ENCODE measurements at regions of chr11 and their contacts with region 1.

Region 1: DNA sequence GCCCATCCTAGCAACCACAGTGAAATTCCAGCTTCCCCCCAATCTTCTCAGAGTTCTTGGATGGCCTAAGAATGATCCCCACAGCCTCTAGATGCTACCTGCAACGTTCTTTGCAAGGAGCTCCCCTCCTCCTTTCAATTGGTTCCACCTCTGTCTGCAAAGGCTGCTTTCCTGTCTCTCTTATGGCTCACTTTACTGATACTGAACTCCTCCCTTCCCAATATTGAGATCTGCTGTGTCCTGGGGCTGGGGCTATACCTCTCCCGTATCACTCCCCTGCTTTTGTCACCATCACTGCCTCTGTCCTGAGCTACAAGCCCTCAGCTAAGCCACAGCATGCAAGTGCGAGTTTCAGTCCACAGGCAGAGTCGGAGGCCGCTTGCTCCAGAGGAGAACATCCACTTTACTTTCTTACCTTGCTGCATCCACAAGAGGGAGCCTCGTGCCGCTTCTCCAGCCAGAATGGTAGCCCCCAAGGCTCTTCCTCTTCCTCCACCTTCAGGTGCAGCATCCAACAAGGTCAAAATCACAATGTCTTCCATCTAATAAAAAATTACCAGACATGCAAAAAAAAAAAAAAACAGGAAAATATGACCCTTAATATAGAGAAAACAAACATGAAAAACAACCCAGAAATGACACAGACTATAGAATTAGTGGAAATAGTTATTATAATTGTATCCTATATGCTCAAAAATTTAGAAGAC is 48.6 kb upstream of the TMEM45B start:
- DNase-seq: peak in 1 of 4 experiments; percentile 51
- ATAC-seq: peak; percentile 93
- H3K4me3 ChIP-seq: no peak overlapping the region
- H3K27ac ChIP-seq: no peak overlapping the region
- H3K4me1 ChIP-seq: no peaks in the 10 kb centered on the region
- H3K27me3 ChIP-seq: no peaks in the 10 kb centered on the region; a peak in 1 of 5 replicates
- CTCF ChIP-seq: peak; percentile 36 to 53 (median 49); a peak in 5 of 6 replicates
- EP300 ChIP-seq: no peak
- POLR2A ChIP-seq: no peak
- RAD21 ChIP-seq: peak in 1 of 2 experiments; percentile 24; a peak in 2 of 4 replicates

Region 2: GRCh38 chr11:129815596-129816461 is 48.8 kb after region 1 on chr11 and contains the start of gene TMEM45B:
- CTCF ChIA-PET with region 1: no interaction called
- POLR2A ChIA-PET with region 1: no interaction called
- in situ Hi-C with region 1: no loop called
- intact Hi-C with region 1: no loop called
- DNase-seq: no peak
- ATAC-seq: no peak
- H3K4me3 ChIP-seq: no peak within 1 kb of the TSS
- H3K27ac ChIP-seq: no peak within 1 kb of the TSS
- H3K4me1 ChIP-seq: peaks cover 0 to 6% of the 10 kb centered on the region in 2 experiments; a peak in 2 of 5 replicates
- H3K27me3 ChIP-seq: peaks cover 6 to 26% of the 10 kb centered on the region in 2 experiments; a peak in 4 of 5 replicates
- CTCF ChIP-seq: no peak
- EP300 ChIP-seq: no peak
- POLR2A ChIP-seq: no peak
- RAD21 ChIP-seq: no peak
- polyA plus RNA-seq, gene TMEM45B: not detected

Region 3: GRCh38 chr11:129861702-129862113 is 94.7 kb after region 1 on chr11:
- CTCF ChIA-PET with region 1: no interaction called
- POLR2A ChIA-PET with region 1: no interaction called
- in situ Hi-C with region 1: no loop called
- intact Hi-C with region 1: loop called (anchors 10 kb)
- DNase-seq: no peak
- ATAC-seq: no peak
- H3K4me3 ChIP-seq: no peak overlapping the region
- H3K27ac ChIP-seq: no peak overlapping the region
- H3K4me1 ChIP-seq: peaks cover 2 to 7% of the 10 kb centered on the region in 2 experiments; a peak in 4 of 5 replicates
- H3K27me3 ChIP-seq: no peaks in the 10 kb centered on the region
- CTCF ChIP-seq: no peak
- EP300 ChIP-seq: no peak
- POLR2A ChIP-seq: no peak
- RAD21 ChIP-seq: no peak

Region 4: DNA sequence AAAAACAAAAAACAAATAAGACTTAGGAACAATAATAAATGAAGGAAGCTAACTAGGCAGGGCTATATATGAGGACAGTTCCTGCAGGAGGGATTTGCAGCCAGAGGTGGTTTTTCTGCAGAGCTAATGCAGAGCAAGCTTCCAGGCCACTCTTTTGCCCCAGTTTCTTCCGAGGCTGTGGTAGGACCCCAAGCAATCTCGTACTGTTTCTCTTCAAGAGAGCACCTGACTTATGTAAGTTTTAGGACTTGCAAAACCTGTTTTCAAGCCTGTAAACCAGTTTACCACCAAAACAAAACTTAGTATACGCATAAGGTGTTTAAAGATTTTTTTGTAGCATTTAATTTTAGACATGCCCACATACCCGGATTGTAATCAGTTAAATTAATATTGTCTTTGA is 294.9 kb after region 1 on chr11:
- CTCF ChIA-PET with region 1: no interaction called
- POLR2A ChIA-PET with region 1: no interaction called
- in situ Hi-C with region 1: no loop called
- intact Hi-C with region 1: no loop called
- DNase-seq: no peak
- ATAC-seq: no peak
- H3K4me3 ChIP-seq: no peak overlapping the region
- H3K27ac ChIP-seq: no peak overlapping the region
- H3K4me1 ChIP-seq: peaks cover 0 to 3% of the 10 kb centered on the region in 2 experiments; a peak in 1 of 5 replicates
- H3K27me3 ChIP-seq: peaks cover 11 to 25% of the 10 kb centered on the region in 2 experiments
- CTCF ChIP-seq: no peak
- EP300 ChIP-seq: no peak
- POLR2A ChIP-seq: no peak
- RAD21 ChIP-seq: no peak

Region 5: DNA sequence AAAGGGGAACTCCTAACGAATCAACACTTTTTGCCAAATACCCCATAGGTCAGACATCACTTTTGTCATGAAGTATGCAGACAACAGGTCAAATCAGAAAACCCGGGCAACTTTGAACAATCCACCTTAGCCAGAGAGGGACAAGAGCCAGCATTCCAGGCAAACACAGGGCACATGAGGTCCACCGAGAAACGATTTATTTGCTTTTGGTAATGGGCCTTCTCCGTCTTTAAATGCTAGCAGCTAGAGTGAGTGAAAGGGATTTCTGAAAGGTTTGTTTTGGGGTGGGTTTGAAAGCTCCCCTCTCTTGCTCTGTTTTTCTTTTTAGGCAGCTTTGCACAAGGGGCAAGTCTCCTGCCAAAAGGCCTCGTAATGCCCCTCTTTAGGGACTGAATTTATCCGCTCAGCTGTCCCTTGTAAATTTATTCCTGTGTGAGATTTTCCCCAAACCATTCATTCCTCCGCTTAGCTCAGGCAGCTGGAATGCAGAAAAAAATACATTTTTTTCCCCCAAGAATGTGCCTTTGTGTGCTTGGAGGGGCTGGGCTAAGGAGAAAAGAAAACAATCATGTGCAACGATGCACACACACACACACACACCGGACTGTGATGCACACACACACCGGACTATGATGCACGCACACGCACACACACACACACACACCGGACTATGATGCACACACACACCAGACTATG is 952.3 kb after region 1 on chr11:
- CTCF ChIA-PET with region 1: no interaction called
- POLR2A ChIA-PET with region 1: no interaction called
- in situ Hi-C with region 1: no loop called
- intact Hi-C with region 1: no loop called
- DNase-seq: no peak
- ATAC-seq: no peak
- H3K4me3 ChIP-seq: no peak overlapping the region
- H3K27ac ChIP-seq: no peak overlapping the region
- H3K4me1 ChIP-seq: no peaks in the 10 kb centered on the region
- H3K27me3 ChIP-seq: peaks cover 0 to 24% of the 10 kb centered on the region in 2 experiments; a peak in 3 of 5 replicates
- CTCF ChIP-seq: no peak
- EP300 ChIP-seq: no peak
- POLR2A ChIP-seq: no peak
- RAD21 ChIP-seq: no peak